Activated T-helper 2 cell treated with anti-CD3 and anti-CD28 coated beads, Interferon-gamma antibody, Interleukin-2, Interleukin-4, amounts not matched to agents 10 μg/mL and 5 μg/mL and 100 μg/mL, durations not matched to agents 14 hours and 24 hours and 36 hours (primary cell): ENCODE measurements at regions of chr21 and their contacts with region 1.

Region 1: DNA sequence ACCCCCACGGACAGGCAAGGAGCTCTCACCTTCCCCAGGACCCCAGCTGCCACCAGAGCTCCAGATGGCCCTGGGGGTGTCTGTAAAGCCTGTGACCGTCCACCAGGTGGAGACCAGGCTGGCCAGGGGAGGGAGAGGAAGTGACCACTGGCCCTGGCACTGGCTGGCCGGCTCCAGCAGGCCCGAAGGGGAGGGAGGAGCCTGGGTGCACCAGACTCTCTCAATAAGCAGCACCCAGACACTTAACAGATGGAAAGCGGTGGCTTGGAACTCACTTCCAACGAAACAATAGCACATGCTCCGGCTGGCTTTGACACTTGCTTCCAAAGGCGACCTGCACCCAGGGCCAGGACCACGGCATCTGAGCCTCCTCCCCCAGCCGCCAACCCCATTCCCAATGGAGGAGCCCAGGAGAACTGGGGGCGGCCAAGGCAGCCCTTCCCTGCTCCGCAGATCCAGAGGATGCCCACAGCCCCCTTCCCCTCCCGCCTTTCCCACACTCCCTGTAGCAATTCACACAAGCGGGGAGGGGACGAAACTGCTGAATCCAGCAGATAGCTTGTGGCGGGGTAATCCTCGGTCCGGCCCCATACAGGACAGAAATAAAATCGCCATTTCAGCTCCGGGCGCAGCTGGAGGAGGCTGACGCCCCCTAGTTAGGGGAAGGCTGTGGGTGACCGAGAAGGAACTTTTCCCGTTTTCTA is 742 bp upstream of the PDE9A start:
- DNase-seq: no peak
- H3K4me3 Mint-ChIP-seq: peak overlapping the region; percentile 77
- H3K27ac Mint-ChIP-seq: peak overlapping the region; percentile 42
- H3K4me1 Mint-ChIP-seq: peaks cover 8% of the 10 kb centered on the region
- H3K27me3 Mint-ChIP-seq: peaks cover 29% of the 10 kb centered on the region

Region 2: GRCh38 chr21:42818328-42818749 is 165.7 kb after region 1 on chr21:
- intact Hi-C with region 1: loop called (anchors 5 kb)
- DNase-seq: peak; percentile 36
- H3K4me3 Mint-ChIP-seq: no peak overlapping the region
- H3K27ac Mint-ChIP-seq: no peak overlapping the region
- H3K4me1 Mint-ChIP-seq: no peaks in the 10 kb centered on the region
- H3K27me3 Mint-ChIP-seq: peaks cover 2% of the 10 kb centered on the region

Region 3: GRCh38 chr21:42833439-42833815 is 180.7 kb after region 1 on chr21:
- intact Hi-C with region 1: loop called (anchors 5 kb)
- DNase-seq: peak; percentile 58
- H3K4me3 Mint-ChIP-seq: peak overlapping the region; percentile 49
- H3K27ac Mint-ChIP-seq: no peak overlapping the region
- H3K4me1 Mint-ChIP-seq: peaks cover 20% of the 10 kb centered on the region
- H3K27me3 Mint-ChIP-seq: peaks cover 3% of the 10 kb centered on the region